HCT116 (cell line): ENCODE measurements at regions of chr16 and their contacts with region 1.

Region 1: GRCh38 chr16:82263521-82264143 is 93.6 kb upstream of the MPHOSPH6 start:
- DNase-seq: peak; percentile 53
- ATAC-seq: peak; percentile 98
- H3K4me3 ChIP-seq: no peak overlapping the region
- H3K27ac ChIP-seq: no peak overlapping the region
- H3K4me1 ChIP-seq: no peaks in the 10 kb centered on the region
- H3K27me3 ChIP-seq: peaks cover 64% of the 10 kb centered on the region
- CTCF ChIP-seq: peak; percentile 66 to 100 (median 98); a peak in 5 of 6 replicates
- POLR2A ChIP-seq: no peak
- RAD21 ChIP-seq: peak; percentile 91

Region 2: GRCh38 chr16:81896900-81897299 is 366.7 kb before region 1 on chr16:
- CTCF ChIA-PET with region 1: no interaction called
- POLR2A ChIA-PET with region 1: no interaction called
- RAD21 ChIA-PET with region 1: no interaction called
- intact Hi-C with region 1: no loop called
- DNase-seq: no peak
- ATAC-seq: no peak
- H3K4me3 ChIP-seq: no peak overlapping the region
- H3K27ac ChIP-seq: no peak overlapping the region
- H3K4me1 ChIP-seq: no peaks in the 10 kb centered on the region
- H3K27me3 ChIP-seq: no peaks in the 10 kb centered on the region
- CTCF ChIP-seq: no peak
- POLR2A ChIP-seq: no peak
- RAD21 ChIP-seq: no peak

Region 3: DNA sequence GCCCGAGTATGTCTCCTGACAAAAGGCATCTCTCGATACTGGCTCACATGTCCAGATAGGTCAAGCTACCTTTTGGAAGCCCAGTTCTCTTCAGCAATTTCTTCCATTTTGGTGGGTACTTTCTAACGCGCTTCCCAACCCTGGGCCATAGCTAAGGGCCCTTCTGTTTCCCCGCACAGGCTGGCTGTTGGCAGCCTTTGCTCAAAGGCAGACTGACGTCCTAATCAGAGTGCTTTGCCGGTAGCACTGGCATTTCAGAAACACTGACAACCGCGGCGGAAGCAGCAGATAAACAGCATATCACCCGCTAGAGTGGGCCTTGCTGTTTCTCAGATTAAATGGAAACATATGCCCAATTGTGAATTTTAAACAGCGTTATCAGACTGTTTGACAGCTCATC is 44.3 kb before region 1 on chr16:
- CTCF ChIA-PET with region 1: no interaction called
- POLR2A ChIA-PET with region 1: no interaction called
- RAD21 ChIA-PET with region 1: no interaction called
- intact Hi-C with region 1: no loop called
- DNase-seq: no peak
- ATAC-seq: no peak
- H3K4me3 ChIP-seq: no peak overlapping the region
- H3K27ac ChIP-seq: no peak overlapping the region
- H3K4me1 ChIP-seq: no peaks in the 10 kb centered on the region
- H3K27me3 ChIP-seq: peaks cover 34% of the 10 kb centered on the region
- CTCF ChIP-seq: no peak
- POLR2A ChIP-seq: no peak
- RAD21 ChIP-seq: no peak

Region 4: GRCh38 chr16:82229796-82230619 is 33.6 kb before region 1 on chr16:
- CTCF ChIA-PET with region 1: interaction called, 14 read pairs
- POLR2A ChIA-PET with region 1: no interaction called
- RAD21 ChIA-PET with region 1: no interaction called
- intact Hi-C with region 1: no loop called
- DNase-seq: peak; percentile 70
- ATAC-seq: peak; percentile 97
- H3K4me3 ChIP-seq: no peak overlapping the region
- H3K27ac ChIP-seq: no peak overlapping the region
- H3K4me1 ChIP-seq: no peaks in the 10 kb centered on the region
- H3K27me3 ChIP-seq: peaks cover 56% of the 10 kb centered on the region
- CTCF ChIP-seq: peak; percentile 90 to 99 (median 99)
- POLR2A ChIP-seq: no peak
- RAD21 ChIP-seq: peak; percentile 93

Region 5: DNA sequence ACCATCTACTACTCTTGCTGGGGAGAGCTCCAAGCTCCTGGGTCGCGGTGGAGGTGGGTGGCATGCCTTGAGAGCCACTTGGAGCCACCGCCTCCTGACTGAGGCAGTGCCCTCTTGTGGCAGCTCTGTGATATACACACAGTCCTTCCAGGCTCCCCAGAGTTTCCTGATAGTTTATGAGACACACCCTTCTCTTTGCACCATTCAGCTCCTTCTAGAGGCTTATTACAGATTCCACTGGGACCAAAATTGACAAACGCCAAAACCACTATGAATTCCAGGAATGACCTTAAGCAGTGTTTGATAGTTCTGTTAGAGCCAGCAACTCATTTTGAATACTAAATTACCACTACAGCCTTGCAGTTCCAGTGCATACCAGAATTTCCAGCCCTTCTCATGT is 193.1 kb after region 1 on chr16:
- CTCF ChIA-PET with region 1: interaction called, 33 read pairs
- POLR2A ChIA-PET with region 1: no interaction called
- RAD21 ChIA-PET with region 1: no interaction called
- intact Hi-C with region 1: loop called (anchors 1 kb)
- DNase-seq: peak; percentile 57
- ATAC-seq: peak; percentile 99
- H3K4me3 ChIP-seq: no peak overlapping the region
- H3K27ac ChIP-seq: no peak overlapping the region
- H3K4me1 ChIP-seq: no peaks in the 10 kb centered on the region
- H3K27me3 ChIP-seq: peaks cover 26% of the 10 kb centered on the region
- CTCF ChIP-seq: peak; percentile 64 to 92 (median 90)
- POLR2A ChIP-seq: no peak
- RAD21 ChIP-seq: peak; percentile 63

Region 6: DNA sequence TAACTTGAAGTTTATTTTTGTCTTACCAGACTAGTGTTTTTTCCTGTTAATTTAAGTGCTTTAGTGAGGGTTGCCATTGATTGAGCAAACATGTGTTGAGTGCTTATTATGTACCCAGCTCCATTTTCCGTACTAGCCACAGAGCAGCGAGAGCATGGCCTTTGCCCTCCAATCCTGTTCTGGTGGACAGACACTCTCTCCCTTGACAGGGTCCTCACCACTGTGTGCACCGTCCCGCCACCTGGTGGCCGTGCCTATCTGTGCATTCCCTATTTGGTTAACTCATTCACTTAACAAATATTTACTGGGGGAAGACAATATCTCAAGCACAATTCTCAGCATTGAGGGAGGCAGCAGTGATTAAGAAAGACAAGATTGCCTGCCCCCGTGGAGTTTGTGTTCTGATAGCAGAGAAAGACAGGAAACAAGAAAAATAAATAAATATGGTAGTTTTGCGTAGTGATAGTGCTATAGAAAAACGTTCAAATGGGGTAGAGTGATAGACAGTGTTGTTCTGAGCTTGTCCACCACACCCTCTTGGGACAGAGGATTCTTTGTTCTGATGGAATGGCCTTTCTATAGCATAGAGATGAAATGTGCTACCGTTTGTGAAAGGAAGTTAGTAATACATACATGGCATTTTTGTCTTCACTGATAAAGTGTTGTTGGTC is 376.2 kb after region 1 on chr16:
- CTCF ChIA-PET with region 1: interaction called, 9 read pairs
- POLR2A ChIA-PET with region 1: no interaction called
- RAD21 ChIA-PET with region 1: no interaction called
- intact Hi-C with region 1: loop called (anchors 1 kb)
- DNase-seq: peak; percentile 42
- ATAC-seq: peak; percentile 96
- H3K4me3 ChIP-seq: no peak overlapping the region
- H3K27ac ChIP-seq: no peak overlapping the region
- H3K4me1 ChIP-seq: no peaks in the 10 kb centered on the region
- H3K27me3 ChIP-seq: no peaks in the 10 kb centered on the region
- CTCF ChIP-seq: peak; percentile 67 to 99 (median 98)
- POLR2A ChIP-seq: no peak
- RAD21 ChIP-seq: peak; percentile 58

Region 7: GRCh38 chr16:83002351-83003334 is 739.0 kb after region 1 on chr16:
- CTCF ChIA-PET with region 1: no interaction called
- POLR2A ChIA-PET with region 1: no interaction called
- RAD21 ChIA-PET with region 1: no interaction called
- intact Hi-C with region 1: no loop called
- DNase-seq: no peak
- ATAC-seq: no peak
- H3K4me3 ChIP-seq: no peak overlapping the region
- H3K27ac ChIP-seq: no peak overlapping the region
- H3K4me1 ChIP-seq: no peaks in the 10 kb centered on the region
- H3K27me3 ChIP-seq: no peaks in the 10 kb centered on the region
- CTCF ChIP-seq: no peak
- POLR2A ChIP-seq: no peak
- RAD21 ChIP-seq: no peak

Region 8: GRCh38 chr16:83447560-83447959 is 1183.9 kb after region 1 on chr16:
- CTCF ChIA-PET with region 1: interaction called, 21 read pairs
- POLR2A ChIA-PET with region 1: no interaction called
- RAD21 ChIA-PET with region 1: no interaction called
- intact Hi-C with region 1: loop called (anchors 2 kb)
- DNase-seq: no peak
- ATAC-seq: no peak
- H3K4me3 ChIP-seq: no peak overlapping the region
- H3K27ac ChIP-seq: no peak overlapping the region
- H3K4me1 ChIP-seq: no peaks in the 10 kb centered on the region
- H3K27me3 ChIP-seq: no peaks in the 10 kb centered on the region
- CTCF ChIP-seq: no peak
- POLR2A ChIP-seq: no peak
- RAD21 ChIP-seq: no peak